ENCODE measurements at regions of chr10 and their contacts with region 1.

Region 1: DNA sequence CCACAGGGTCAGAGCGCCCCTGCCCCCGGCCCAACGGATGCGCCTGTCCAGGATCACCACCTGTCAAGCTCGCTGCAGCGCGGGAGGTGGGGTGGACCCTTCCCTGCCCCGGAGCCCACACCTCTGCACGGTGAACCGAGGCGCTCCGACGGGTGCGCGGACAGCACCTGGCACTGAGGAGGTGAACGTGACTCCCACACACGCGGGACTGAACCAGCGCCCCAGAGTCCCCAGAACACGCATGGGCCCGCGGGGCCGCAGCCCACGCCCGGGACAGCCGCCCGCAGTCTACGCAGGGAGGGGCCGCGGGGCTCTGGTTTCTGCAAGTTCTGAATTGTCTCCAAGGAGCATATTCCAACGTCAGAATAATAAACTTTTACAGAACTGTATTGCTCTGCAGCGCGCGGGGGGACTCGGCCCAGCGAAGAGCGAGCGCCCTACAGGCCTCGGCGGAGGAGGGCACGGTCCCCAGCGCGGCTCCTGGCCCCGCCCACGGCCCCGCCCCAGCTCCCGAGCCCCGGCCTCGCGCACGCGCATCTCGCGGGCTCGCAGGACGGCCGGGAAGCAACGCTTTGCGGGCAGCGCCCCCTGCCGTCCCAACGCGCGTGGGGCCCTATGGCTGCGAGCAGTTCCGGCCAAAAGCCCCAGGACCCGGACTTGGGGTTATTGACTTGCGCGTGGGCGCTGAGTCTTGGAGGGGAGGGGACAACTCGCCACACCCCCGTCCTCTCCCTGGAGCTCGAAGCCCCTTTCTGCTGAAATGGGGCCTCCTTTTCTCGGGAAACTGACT is 29.7 kb downstream of the OAT start:
- DNase-seq: peak; percentile 71 to 92 (median 85)
- H3K4me3 ChIP-seq: peak overlapping the region; percentile 44 to 84 (median 68)
- H3K27ac ChIP-seq: peak overlapping the region in 29 of 59 donors; percentile 5 to 80 (median 52)
- H3K27me3 ChIP-seq: no peaks in the 10 kb centered on the region
- CTCF ChIP-seq: peak; percentile 83 to 100 (median 98)

Region 2: DNA sequence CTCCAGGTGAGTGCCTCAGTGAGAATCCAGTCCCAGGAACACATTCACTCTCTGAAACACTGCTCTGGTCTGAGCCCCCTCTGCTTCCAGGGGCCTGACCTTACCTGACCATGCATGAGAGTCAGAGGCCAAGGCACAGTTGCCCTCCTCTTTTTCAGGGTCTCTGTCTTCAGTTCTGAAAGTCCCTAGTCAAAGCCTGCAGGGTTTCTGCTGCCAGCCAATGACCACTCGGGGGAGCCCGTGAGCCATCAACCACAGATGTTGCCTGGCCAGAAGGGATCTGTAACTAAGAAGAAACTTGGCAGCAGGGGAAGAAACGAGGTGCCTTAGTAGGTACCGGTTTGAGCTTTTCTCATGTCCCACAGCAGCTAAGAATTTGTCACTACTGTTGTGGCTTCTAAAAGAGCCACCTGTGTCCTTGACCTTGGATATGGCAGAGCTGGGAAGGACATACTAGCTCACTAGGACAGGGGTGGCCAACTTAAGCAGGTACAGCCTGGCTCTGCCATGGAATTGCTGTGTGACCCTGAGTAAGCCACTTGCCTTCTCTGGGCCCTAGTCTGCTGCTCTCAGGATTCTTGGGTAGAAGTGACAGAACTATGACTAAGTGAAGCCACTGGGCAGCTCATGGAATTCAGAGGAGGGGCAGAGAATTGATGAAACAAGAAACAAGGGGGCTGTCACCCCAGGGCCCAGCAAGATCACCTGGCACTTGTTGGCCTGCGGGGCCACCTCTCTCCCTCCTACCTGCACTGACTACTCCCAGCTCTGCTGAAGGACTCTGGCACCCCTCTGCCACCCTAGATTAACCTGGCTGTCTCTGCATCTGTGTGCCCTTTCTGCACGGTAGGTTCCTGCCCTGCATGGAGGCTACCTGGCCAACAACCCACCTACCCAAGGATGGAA is 806.7 kb before region 1 on chr10:
- intact Hi-C with region 1: loop called (anchors 5 to 10 kb)
- DNase-seq: peak; percentile 50 to 90 (median 82)
- H3K4me3 ChIP-seq: no peak overlapping the region
- H3K27ac ChIP-seq: no peak overlapping the region
- H3K27me3 ChIP-seq: peaks cover 0 to 42% (median 12%) of the 10 kb centered on the region in 45 donors
- CTCF ChIP-seq: peak; percentile 63 to 95 (median 87)

Region 3: DNA sequence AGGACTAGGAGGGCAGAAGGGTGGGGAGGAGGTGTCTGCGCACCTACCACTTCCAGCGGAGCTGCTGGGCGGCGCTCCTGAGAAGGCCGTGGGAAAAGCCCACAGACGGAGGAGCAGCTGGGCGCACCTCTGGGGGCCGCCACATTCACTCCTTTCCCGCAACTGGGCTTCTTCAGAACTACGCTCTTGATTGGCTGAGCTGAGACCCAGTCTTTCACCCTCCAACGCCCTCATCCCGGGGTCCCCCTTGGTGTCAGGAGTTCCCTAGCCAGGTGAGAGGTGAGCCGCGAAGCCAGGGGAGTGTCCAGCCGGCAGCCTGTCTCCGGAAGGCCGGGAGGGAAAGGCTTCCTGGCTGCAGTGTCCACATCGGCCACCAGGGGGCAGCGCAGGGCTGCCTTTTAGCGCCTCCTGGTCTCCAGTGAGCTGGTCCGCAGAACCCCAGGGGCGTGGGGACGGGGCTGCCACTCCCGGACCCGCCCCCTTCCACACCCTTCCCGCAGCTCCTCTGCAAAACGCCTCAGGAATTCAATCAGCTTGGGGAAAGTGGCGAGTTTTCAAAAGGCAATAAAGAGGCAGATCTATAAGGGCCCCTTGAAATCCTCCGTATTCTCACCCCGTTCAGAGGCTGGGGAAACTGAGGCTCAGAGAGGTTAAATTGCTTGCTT is 394.5 kb before region 1 on chr10:
- intact Hi-C with region 1: loop called (anchors 1 kb)
- DNase-seq: peak; percentile 72 to 91 (median 82)
- H3K4me3 ChIP-seq: peak overlapping the region in 54 of 59 donors; percentile 0 to 55 (median 32)
- H3K27ac ChIP-seq: no peak overlapping the region
- H3K27me3 ChIP-seq: peaks cover 0 to 55% (median 25%) of the 10 kb centered on the region in 45 donors
- CTCF ChIP-seq: peak; percentile 98 to 100 (median 100)

Region 4: GRCh38 chr10:124092860-124093773 is 295.9 kb before region 1 on chr10 and contains the start of gene CHST15:
- intact Hi-C with region 1: loop called in 1 of 2 experiments (anchors 10 kb)
- DNase-seq: peak in 4 of 10 donors; percentile 46 to 60 (median 52)
- H3K4me3 ChIP-seq: peak within 1 kb of the TSS; percentile 20 to 82 (median 67)
- H3K27ac ChIP-seq: peak within 1 kb of the TSS; percentile 8 to 94 (median 87)
- H3K27me3 ChIP-seq: peaks cover 0 to 37% (median 0%) of the 10 kb centered on the region in 45 donors
- CTCF ChIP-seq: peak in 28 of 56 donors; percentile 2 to 42 (median 18)
- total RNA-seq, gene CHST15: 24.1 to 81.5 (median 53.1) TPM